Activated naive CD4-positive, alpha-beta T cell treated with anti-CD3 and anti-CD28 coated beads for 36 hours (primary cell): ENCODE measurements at regions of chr10 and their contacts with region 1.

Region 1: GRCh38 chr10:122980209-122981065 is at the start of gene PSTK:
- DNase-seq: peak; percentile 90
- H3K4me3 Mint-ChIP-seq: peak within 1 kb of the TSS; percentile 87
- H3K27ac Mint-ChIP-seq: peak within 1 kb of the TSS; percentile 92
- H3K4me1 Mint-ChIP-seq: peaks cover 17% of the 10 kb centered on the region
- H3K27me3 Mint-ChIP-seq: no peaks in the 10 kb centered on the region
- total RNA-seq, gene PSTK: 3.9 to 4.2 TPM

Region 2: DNA sequence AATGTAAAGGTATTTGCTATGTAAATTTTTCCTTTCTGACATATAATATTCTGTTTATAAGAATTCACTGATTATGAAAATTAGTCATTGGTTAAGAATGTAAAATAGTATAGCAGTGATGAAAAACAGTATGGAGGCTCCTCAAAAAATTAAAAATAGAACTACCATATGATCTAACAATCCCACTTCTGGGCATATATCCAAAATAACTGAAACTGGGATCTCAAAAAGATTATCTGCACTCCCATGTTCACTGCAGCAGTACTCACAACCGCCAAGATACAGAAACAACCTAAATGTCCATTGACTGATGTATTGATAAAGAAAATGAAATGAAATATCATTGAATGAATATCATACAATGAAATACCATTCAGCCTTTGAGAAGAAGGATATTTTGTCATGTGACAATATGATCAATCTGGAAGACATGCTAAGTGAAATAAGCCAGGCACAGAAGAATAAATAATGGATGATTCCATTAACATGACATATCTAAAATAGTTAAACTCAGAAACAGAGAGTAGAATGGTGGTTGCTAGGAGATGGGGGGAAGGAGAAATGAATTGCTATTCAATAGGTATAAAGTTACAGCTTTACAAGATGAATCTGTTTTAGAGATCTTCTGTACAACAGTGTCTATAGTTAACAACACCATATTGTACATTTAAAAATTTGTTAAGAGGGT is 40.4 kb before region 1 on chr10:
- CTCF ChIA-PET with region 1: no interaction called
- intact Hi-C with region 1: no loop called
- DNase-seq: no peak
- H3K4me3 Mint-ChIP-seq: no peak overlapping the region
- H3K27ac Mint-ChIP-seq: no peak overlapping the region
- H3K4me1 Mint-ChIP-seq: peaks cover 5% of the 10 kb centered on the region
- H3K27me3 Mint-ChIP-seq: no peaks in the 10 kb centered on the region

Region 3: GRCh38 chr10:122953827-122954730 is 26.4 kb before region 1 on chr10 and contains the start of gene C10orf88:
- CTCF ChIA-PET with region 1: interaction called, 6 read pairs
- intact Hi-C with region 1: loop called (anchors 1 kb)
- DNase-seq: peak; percentile 97
- H3K4me3 Mint-ChIP-seq: peak within 1 kb of the TSS; percentile 81
- H3K27ac Mint-ChIP-seq: peak within 1 kb of the TSS; percentile 82
- H3K4me1 Mint-ChIP-seq: peaks cover 28% of the 10 kb centered on the region
- H3K27me3 Mint-ChIP-seq: no peaks in the 10 kb centered on the region
- total RNA-seq, gene C10orf88: 4.2 to 5.2 TPM

Region 4: GRCh38 chr10:122968698-122969097 is 11.7 kb before region 1 on chr10:
- CTCF ChIA-PET with region 1: no interaction called
- intact Hi-C with region 1: no loop called
- DNase-seq: no peak
- H3K4me3 Mint-ChIP-seq: no peak overlapping the region
- H3K27ac Mint-ChIP-seq: no peak overlapping the region
- H3K4me1 Mint-ChIP-seq: no peaks in the 10 kb centered on the region
- H3K27me3 Mint-ChIP-seq: peaks cover 11% of the 10 kb centered on the region

Region 5: GRCh38 chr10:123287594-123288247 is 307.3 kb after region 1 on chr10:
- CTCF ChIA-PET with region 1: no interaction called
- intact Hi-C with region 1: loop called (anchors 1 kb)
- DNase-seq: peak; percentile 78
- H3K4me3 Mint-ChIP-seq: no peak overlapping the region
- H3K27ac Mint-ChIP-seq: peak overlapping the region; percentile 78
- H3K4me1 Mint-ChIP-seq: peaks cover 19% of the 10 kb centered on the region
- H3K27me3 Mint-ChIP-seq: peaks cover 2% of the 10 kb centered on the region